Activated CD4-positive, alpha-beta memory T cell treated with anti-CD3 and anti-CD28 coated beads, Interleukin-2, amount 10 ng/mL, durations not matched to agents 7 days and 5 days (primary cell): ENCODE measurements at regions of chr6 and their contacts with region 1.

Region 1: GRCh38 chr6:188821-189655 is 103.2 kb upstream of the DUSP22 start:
- DNase-seq: peak; percentile 91
- H3K4me3 Mint-ChIP-seq: peak overlapping the region; percentile 13
- H3K27ac Mint-ChIP-seq: peak overlapping the region; percentile 74
- H3K4me1 Mint-ChIP-seq: peaks cover 50% of the 10 kb centered on the region
- H3K27me3 Mint-ChIP-seq: no peaks in the 10 kb centered on the region

Region 2: DNA sequence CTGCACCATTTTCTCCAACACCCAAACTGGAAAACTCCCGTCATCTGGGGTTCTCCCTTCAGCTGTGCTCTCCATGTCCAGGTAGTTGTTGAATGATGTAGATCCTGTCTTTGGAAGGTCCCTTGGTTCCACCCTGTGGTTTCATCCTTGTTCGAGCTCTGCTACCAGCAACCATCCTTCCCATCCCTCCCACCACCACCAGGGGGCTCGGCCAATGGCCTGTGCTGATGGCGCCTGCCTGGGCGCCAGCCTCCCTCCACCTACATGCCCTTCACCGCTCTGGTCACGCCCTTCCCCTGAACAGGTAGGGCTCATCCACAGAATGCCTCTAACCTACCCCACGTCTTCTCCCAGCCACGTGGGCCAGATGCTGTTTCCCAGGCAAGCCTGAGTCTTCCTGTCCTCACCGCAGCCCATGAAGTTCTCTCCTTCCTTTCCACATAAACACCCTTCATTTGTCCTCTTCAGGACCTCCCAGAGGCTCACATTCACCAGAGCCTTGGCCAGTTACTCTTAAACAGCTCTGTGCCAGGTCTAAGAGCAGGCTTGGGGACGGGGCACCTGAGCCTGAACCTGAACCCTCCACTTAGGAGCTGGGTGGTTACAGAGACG is 28.1 kb after region 1 on chr6:
- CTCF ChIA-PET with region 1: interaction called, 34 read pairs
- POLR2A ChIA-PET with region 1: interaction called, 59 read pairs
- DNase-seq: no peak
- H3K4me3 Mint-ChIP-seq: no peak overlapping the region
- H3K27ac Mint-ChIP-seq: peak overlapping the region; percentile 11
- H3K4me1 Mint-ChIP-seq: peaks cover 65% of the 10 kb centered on the region
- H3K27me3 Mint-ChIP-seq: peaks cover 12% of the 10 kb centered on the region

Region 3: DNA sequence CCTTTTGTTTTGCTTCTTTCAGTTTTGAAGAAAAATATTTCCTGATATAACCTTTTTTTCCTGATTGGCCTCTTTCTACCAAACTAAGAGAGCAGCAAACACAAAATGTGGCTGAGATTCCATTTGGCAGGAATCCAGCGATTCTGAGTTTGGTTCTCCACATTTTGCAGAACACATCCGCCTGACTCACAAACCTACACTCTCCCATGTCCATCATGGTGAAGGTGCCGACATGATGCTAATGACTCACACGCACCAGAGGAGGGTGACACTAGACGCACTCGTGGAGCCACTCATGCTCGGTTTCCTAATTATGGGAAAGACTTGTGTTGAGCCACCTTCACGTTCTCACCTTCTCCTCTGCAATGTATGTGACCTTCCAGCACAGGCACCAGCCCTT is 57.3 kb after region 1 on chr6:
- CTCF ChIA-PET with region 1: no interaction called
- POLR2A ChIA-PET with region 1: no interaction called
- DNase-seq: no peak
- H3K4me3 Mint-ChIP-seq: no peak overlapping the region
- H3K27ac Mint-ChIP-seq: no peak overlapping the region
- H3K4me1 Mint-ChIP-seq: peaks cover 12% of the 10 kb centered on the region
- H3K27me3 Mint-ChIP-seq: peaks cover 35% of the 10 kb centered on the region

Region 4: DNA sequence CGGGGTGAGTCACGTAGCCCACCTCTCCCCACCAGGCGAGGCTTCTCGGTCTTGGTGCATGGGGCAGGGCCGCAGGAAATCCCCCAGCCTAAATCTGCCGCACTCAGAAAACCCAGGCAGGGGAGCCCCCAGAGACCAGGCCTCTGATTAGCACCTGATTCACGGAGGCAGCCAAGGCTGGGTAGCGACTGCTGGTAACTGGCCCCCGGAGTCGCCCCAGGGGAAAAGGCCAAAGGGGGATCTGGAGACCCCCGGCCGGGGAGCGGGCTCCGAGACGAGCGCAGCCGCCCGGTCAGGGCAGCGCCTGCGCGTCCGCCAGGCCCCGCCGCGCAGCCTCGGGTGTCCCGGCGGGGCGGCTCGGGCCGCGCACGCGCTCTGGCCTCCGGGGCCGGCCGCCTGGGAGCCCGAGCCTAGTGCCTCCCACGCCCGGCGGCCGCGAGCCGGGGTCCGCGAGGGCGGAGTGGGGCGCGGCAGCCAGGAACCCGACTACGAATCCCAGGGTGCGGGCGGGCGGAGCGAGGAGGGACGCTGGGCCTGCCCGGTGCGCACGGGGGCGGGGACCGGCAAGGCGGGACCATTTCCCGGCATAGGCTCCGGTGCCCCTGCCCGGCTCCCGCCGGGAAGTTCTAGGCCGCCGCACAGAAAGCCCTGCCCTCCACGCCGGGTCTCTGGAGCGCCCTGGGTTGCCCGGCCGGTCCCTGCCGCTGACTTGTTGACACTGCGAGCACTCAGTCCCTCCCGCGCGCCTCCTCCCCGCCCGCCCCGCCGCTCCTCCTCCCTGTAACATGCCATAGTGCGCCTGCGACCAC is 102.9 kb after region 1 on chr6 and contains the start of gene DUSP22:
- CTCF ChIA-PET with region 1: interaction called, 16 read pairs
- POLR2A ChIA-PET with region 1: interaction called, 9 read pairs
- DNase-seq: peak; percentile 85
- H3K4me3 Mint-ChIP-seq: peak within 1 kb of the TSS; percentile 84
- H3K27ac Mint-ChIP-seq: peak within 1 kb of the TSS; percentile 94
- H3K4me1 Mint-ChIP-seq: peaks cover 48% of the 10 kb centered on the region
- H3K27me3 Mint-ChIP-seq: peaks cover 4% of the 10 kb centered on the region
- total RNA-seq, gene DUSP22: 36.3 to 41.5 TPM

Region 5: DNA sequence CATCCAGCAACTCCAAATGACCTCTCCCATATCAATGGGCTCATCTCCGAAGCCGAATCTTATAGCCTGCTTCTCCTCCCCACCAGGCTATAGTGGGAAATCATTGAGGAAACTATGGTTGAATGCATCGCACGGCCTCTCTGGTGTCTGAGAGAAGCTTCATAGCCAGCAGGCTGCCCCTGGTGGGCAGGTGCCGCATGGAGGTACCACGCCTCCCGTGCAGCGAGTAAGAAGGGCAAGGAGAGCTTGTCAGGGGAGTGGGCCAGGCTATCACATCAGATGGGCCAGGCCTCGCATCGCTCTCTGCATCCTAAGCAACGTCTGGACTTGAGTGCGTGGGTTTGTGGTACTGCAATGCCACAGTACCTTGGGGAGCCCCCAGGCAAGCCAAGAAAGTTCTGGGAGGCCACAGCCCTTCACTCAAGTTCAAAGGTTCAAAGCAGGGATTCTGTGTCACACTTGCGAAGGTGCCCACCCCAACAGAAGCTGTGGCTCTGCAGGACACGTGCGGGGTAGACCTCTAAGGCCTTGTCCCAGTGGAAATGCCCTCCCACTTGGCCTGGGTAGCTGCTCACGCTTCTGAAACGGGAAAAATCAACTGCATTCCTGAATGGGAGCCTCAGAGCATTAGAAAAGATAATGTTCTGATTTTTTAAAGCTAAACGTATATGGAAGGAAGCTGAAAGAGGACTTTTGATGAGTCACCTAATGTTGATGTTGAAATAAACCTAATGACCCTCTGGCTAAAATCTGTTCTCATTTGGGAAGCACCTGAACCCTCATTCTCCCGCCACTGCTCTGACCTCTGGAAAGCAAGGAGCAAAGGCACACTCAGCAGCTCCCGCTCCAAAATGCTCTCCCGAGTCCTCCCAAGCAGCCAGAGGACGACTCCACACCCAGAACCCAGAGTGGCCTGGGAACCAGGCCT is 194.1 kb after region 1 on chr6:
- CTCF ChIA-PET with region 1: interaction called, 57 read pairs
- POLR2A ChIA-PET with region 1: interaction called, 3 read pairs
- DNase-seq: no peak
- H3K4me3 Mint-ChIP-seq: no peak overlapping the region
- H3K27ac Mint-ChIP-seq: no peak overlapping the region
- H3K4me1 Mint-ChIP-seq: peaks cover 11% of the 10 kb centered on the region
- H3K27me3 Mint-ChIP-seq: peaks cover 20% of the 10 kb centered on the region

Region 6: DNA sequence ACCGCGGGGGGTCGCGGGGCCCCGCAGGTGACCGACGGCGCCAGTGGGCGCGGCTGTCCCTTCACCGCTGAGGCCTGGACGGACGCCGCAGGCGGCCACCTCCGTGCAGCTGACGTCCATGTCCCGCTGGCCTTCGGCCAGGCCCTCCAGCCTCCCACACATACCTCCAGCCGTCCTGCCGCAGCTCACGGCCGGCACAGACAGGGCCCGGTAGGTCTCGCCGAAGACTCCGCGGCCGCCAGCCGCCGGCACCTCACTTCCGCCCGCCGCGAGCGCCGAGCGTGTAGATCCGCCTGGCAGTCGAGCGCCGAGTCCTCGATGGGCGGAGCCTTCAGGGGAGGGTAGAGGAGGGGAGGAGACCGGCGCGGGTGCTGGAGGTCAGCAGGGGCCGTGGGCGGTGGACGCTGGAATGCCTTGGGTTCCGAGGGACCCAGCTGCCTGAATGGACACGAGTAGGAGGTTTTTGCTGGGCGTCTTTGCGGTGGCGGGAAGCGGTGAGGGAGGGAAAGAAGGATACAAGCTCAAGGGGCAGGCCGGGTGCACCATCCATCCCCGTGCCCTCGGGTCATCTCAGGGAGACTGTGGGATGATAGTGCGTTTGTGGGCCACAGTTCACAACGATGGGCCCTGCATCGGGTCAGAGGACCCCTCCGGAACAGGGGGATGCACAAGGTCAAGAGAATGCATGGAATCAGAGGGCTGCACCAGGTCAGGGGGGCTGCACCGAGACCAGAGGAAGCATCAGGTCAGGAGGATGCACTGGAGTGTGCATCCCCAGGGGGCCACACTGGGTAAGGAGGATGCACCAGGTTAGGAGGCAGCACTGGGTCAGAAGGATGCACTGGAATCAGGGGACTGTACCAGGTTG is 504.1 kb after region 1 on chr6 and contains the start of gene EXOC2:
- CTCF ChIA-PET with region 1: no interaction called
- POLR2A ChIA-PET with region 1: no interaction called
- DNase-seq: peak; percentile 90
- H3K4me3 Mint-ChIP-seq: peak within 1 kb of the TSS; percentile 92
- H3K27ac Mint-ChIP-seq: peak within 1 kb of the TSS; percentile 90
- H3K4me1 Mint-ChIP-seq: peaks cover 35% of the 10 kb centered on the region
- H3K27me3 Mint-ChIP-seq: no peaks in the 10 kb centered on the region
- total RNA-seq, gene EXOC2: 31.9 to 35.7 TPM